AG04450 (cell line): ENCODE measurements at regions of chr7 and their contacts with region 1.

Region 1: DNA sequence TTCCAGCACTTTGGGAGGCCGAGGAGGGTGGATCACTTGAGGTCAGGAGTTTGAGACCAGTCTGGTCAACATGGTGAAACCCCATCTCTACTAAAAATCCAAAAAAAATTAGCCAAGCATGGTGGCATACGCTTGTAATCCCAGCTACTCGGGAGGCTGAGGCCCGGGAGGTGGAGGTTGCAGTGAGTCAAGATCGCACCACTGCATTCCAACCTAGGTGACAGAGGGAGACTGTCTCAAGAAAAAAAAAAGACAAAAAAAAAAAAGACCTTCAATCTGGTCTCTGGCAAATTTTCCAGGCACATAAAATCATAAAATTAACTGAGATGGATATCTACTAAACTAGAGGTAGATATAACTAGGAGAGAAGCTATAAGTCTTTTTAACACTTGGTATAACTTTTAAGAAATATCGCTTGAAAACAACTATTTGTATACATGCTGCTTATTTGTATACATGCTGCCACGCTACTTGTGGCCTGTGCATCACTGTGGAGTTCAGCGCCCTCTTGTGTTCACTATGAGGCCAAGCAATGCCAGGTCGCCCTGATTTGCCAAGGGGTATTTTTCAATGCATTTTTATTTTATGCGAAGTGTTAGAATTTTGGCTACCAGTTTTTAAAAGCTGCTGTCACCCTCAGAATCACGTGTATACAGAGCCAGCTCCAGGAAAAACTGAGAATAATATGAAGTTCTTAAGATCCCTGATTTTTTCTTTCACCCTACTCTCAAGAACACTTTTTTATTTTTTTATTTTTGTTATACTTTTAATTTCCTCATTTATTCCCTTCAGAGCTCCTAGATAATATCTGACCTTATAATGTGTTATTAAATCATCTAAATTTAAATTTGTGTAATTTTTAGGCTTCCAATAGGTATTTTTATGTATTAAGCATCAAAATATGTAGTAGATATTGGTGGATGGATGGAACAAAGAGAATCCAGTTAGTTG is 26.7 kb downstream of the CYCS start:
- DNase-seq: peak; percentile 39
- H3K4me3 ChIP-seq: no peak overlapping the region
- H3K27ac ChIP-seq: no peak overlapping the region
- H3K27me3 ChIP-seq: peaks cover 3% of the 10 kb centered on the region
- CTCF ChIP-seq: peak; percentile 93

Region 2: GRCh38 chr7:24572997-24573625 is 525.3 kb before region 1 on chr7 and contains the start of gene PALS2:
- CTCF ChIA-PET with region 1: interaction called, 27 read pairs
- POLR2A ChIA-PET with region 1: no interaction called
- DNase-seq: no peak
- H3K4me3 ChIP-seq: peak within 1 kb of the TSS; percentile 74
- H3K27ac ChIP-seq: no peak within 1 kb of the TSS
- H3K27me3 ChIP-seq: peaks cover 18% of the 10 kb centered on the region
- CTCF ChIP-seq: no peak
- polyA plus RNA-seq, gene PALS2: 9.2 and 11.6 TPM in 2 replicates

Region 3: GRCh38 chr7:24715661-24716479 is 382.5 kb before region 1 on chr7:
- CTCF ChIA-PET with region 1: interaction called, 10 read pairs
- POLR2A ChIA-PET with region 1: no interaction called
- DNase-seq: no peak
- H3K4me3 ChIP-seq: no peak overlapping the region
- H3K27ac ChIP-seq: peak overlapping the region; percentile 31
- H3K27me3 ChIP-seq: no peaks in the 10 kb centered on the region
- CTCF ChIP-seq: peak; percentile 58

Region 4: DNA sequence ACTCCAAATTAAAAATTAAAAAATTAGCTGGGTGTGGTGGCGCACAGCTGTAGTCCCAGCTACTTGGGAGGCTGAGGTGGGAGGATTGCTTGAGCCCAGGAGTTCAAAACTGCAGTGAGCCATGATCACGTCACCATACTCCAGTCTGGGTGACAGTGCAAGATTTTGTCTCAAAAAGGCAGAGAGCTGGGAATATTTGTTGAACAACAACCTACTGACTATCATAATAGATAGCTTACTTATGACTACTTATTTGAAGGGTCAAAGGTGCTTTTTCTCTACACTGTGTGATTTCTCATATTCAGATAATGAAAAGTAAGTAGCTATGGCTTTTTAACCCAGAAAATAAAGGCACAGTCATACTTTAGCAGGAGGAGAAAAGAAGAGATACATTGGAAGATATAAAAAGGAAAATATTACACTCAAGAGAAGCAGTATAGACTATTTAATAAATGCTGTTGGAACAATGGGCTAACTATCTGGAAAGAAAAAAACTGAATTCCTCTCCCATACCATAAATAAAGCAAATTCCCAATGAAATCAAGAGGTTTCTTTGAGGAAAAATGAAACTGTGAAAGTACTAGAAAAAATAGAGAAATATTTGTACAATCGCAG is 347.8 kb before region 1 on chr7:
- CTCF ChIA-PET with region 1: interaction called, 19 read pairs
- POLR2A ChIA-PET with region 1: interaction called, 3 read pairs
- DNase-seq: no peak
- H3K4me3 ChIP-seq: no peak overlapping the region
- H3K27ac ChIP-seq: no peak overlapping the region
- H3K27me3 ChIP-seq: no peaks in the 10 kb centered on the region
- CTCF ChIP-seq: no peak

Region 5: DNA sequence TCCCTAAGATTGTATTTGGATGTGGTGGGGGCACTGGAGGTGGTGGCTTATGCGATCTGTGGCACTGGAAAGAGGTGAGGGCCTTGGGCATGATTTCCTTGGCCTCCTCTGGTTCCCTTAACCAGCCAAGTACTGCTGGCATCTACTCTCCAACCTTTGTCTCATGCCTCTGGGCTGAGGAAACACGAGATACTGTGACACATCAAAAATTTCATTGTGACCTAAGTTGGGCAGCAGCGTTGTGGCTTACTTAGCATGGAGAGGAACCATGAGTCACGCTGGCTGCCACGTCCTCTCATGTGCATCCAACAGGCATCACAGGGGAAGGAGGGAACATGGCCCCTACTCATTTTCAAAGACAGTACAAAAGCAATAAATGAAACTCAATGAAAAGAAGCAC is 311.4 kb before region 1 on chr7:
- CTCF ChIA-PET with region 1: interaction called, 12 read pairs
- POLR2A ChIA-PET with region 1: no interaction called
- DNase-seq: peak; percentile 81
- H3K4me3 ChIP-seq: no peak overlapping the region
- H3K27ac ChIP-seq: peak overlapping the region; percentile 86
- H3K27me3 ChIP-seq: no peaks in the 10 kb centered on the region
- CTCF ChIP-seq: no peak

Region 6: DNA sequence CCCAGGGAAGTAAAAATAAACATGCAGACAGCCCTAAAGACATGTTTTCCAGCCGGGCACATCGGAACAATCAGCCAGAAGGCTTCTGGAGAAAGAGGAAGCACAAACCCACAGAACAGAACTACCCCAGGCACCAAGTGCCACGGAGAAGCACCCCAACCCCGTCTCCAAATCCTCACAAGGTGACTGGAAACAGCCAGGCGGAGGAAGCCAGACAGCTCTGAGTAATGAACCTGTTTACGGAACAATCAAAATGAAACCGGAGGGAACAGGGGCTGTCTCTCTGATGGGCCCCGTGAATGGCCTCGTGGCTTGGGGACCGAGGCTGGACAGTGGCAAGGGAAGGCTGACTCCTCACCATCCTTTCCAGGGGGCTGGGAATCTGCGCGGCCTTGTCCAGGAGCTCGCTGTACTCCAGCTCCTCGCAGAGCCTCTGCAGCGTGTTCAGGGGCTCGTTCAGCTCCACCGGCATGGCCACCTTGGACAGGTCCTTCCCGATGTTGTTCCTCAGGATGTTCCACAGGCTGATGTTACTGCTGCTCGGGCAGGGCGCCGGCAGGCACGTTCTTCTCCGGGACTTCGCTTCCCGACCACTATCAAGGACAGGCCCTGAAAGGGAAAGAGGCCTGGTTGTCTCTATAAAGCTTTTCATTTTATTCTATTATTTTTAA is 264.1 kb before region 1 on chr7:
- CTCF ChIA-PET with region 1: interaction called, 10 read pairs
- POLR2A ChIA-PET with region 1: no interaction called
- DNase-seq: no peak
- H3K4me3 ChIP-seq: no peak overlapping the region
- H3K27ac ChIP-seq: no peak overlapping the region
- H3K27me3 ChIP-seq: no peaks in the 10 kb centered on the region
- CTCF ChIP-seq: no peak

Region 7: DNA sequence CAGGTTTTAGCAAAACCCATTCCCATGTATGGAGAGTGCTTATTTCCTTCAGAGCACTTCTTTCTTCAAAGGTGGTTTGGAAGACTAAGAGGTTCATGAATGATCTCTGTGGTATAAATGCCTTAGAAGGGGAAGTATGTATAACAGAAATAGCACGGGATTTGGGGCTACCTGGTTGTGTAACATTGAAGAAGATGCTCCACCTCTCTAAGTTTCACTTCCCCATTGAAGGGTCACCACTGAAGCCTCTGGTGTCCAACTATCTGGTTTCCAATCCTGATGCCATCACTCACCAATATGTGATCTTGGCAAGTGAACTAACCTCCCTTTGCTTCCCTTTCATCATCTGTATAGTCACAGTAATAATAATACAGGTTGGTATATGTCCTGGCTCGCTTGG is 10.5 kb before region 1 on chr7:
- CTCF ChIA-PET with region 1: interaction called, 28 read pairs
- POLR2A ChIA-PET with region 1: no interaction called
- DNase-seq: no peak
- H3K4me3 ChIP-seq: no peak overlapping the region
- H3K27ac ChIP-seq: no peak overlapping the region
- H3K27me3 ChIP-seq: no peaks in the 10 kb centered on the region
- CTCF ChIP-seq: no peak